ENCODE measurements at regions of chr9 and their contacts with region 1.

Region 1: GRCh38 chr9:98796364-98797101 is at the start of gene ANKS6:
- DNase-seq: peak; percentile 64 to 93 (median 82)
- ATAC-seq: peak; percentile 91
- H3K4me3 ChIP-seq: peak within 1 kb of the TSS; percentile 80
- H3K4me3 Mint-ChIP-seq: peak within 1 kb of the TSS; percentile 94
- H3K27ac ChIP-seq: peak within 1 kb of the TSS; percentile 23 to 31
- H3K27ac Mint-ChIP-seq: peak within 1 kb of the TSS; percentile 72
- H3K4me1 ChIP-seq: peaks cover 22% of the 10 kb centered on the region
- H3K4me1 Mint-ChIP-seq: peaks cover 37% of the 10 kb centered on the region
- H3K27me3 ChIP-seq: no peaks in the 10 kb centered on the region
- H3K27me3 Mint-ChIP-seq: no peaks in the 10 kb centered on the region
- CTCF ChIP-seq: peak; percentile 32
- total RNA-seq, gene ANKS6: 11.8 to 12.2 TPM

Region 2: DNA sequence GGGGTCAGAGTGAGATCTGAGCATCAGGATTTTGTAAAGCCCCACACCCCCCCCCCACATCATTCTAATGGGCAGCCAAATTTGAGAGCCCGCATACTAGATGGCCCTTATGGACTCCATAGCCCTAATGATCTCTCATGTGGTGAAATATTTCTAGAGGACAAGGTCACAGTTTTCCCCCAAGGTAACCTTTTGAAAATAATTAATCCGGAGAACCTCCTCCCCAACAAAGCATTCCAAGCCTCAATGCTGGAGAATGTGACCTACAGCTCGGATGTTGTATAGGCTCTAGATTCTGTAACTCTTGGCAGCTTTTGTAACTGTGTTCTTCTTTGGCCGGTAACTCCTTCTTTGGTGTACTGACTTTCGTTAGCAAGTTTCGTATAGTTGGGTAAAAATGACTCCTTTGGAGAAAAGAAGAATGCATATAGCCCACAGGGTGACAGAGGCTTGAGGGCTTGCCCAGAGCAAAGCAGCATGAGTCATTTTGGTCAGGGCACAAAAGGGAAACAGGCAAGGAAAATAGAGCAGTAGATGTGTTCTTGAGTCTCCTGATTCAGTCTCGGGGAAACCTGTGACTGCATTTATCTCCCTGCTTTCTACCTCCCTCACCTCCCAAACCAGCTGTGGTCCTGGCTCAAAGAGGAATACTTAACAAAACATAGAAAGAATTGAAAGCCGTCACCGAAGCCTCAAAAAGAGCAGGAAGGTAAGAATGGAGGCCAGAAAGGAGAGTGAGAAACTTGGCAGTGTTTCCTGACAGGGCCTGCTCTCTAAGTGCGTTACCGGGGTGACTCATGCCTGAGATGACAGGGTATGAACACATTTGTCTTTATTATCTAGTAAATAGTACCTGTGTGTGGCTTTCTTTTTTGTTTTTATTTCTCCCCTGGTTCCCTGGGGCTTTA is 1092.8 kb before region 1 on chr9:
- CTCF ChIA-PET with region 1: no interaction called
- POLR2A ChIA-PET with region 1: no interaction called
- intact Hi-C with region 1: loop called in 1 of 2 experiments (anchors 10 kb)
- DNase-seq: peak in 5 of 14 experiments; percentile 11 to 45 (median 24)
- ATAC-seq: peak; percentile 58
- H3K4me3 ChIP-seq: no peak overlapping the region
- H3K4me3 Mint-ChIP-seq: no peak overlapping the region
- H3K27ac ChIP-seq: no peak overlapping the region
- H3K27ac Mint-ChIP-seq: peak overlapping the region; percentile 68
- H3K4me1 ChIP-seq: peaks cover 29% of the 10 kb centered on the region
- H3K4me1 Mint-ChIP-seq: peaks cover 20% of the 10 kb centered on the region
- H3K27me3 ChIP-seq: no peaks in the 10 kb centered on the region
- H3K27me3 Mint-ChIP-seq: peaks cover 9% of the 10 kb centered on the region
- CTCF ChIP-seq: no peak

Region 3: DNA sequence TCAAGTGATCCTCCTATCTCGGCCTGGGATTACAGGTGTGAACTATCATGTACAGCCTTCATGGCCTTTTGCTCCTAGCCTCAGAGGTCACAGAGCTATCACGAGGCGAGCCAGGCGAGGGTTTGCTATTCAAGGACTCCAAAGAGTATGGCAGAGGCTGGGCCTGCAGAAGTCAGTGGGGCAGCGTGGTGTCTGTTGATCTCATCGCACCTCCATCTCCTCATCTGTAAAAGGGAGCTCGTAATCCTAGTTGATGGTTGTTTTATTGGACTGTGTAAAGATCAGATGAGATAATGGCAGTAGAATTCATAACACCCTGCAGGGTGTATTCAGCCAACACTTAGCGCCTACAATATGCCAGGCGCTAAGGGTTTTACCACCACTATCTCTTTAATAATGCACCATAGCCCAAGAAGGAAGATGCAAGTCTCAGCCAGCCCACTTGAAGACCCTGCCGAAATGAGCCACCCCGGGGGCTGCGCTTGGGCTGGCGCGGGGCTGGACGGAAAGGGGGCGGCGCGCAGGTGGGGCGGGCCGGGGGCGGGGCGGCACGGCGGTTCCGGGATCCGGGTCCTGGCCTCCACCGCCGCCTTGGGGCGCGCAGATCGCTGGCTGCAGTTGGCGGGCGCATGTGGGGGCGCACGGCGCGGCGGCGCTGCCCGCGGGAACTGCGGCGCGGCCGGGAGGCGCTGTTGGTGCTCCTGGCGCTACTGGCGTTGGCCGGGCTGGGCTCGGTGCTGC is 10.7 kb after region 1 on chr9 and contains the start of gene GALNT12:
- CTCF ChIA-PET with region 1: interaction called, 3 read pairs
- POLR2A ChIA-PET with region 1: interaction called, 15 read pairs
- intact Hi-C with region 1: loop called in 1 of 2 experiments (anchors 1 kb)
- DNase-seq: peak in 13 of 14 experiments; percentile 26 to 77 (median 54)
- ATAC-seq: peak; percentile 83
- H3K4me3 ChIP-seq: peak within 1 kb of the TSS; percentile 77
- H3K4me3 Mint-ChIP-seq: peak within 1 kb of the TSS; percentile 94
- H3K27ac ChIP-seq: no peak within 1 kb of the TSS
- H3K27ac Mint-ChIP-seq: peak within 1 kb of the TSS; percentile 39
- H3K4me1 ChIP-seq: peaks cover 20% of the 10 kb centered on the region
- H3K4me1 Mint-ChIP-seq: peaks cover 27% of the 10 kb centered on the region
- H3K27me3 ChIP-seq: peaks cover 4 to 5% of the 10 kb centered on the region in 2 experiments
- H3K27me3 Mint-ChIP-seq: peaks cover 8% of the 10 kb centered on the region
- CTCF ChIP-seq: no peak
- total RNA-seq, gene GALNT12: 8.7 to 11.5 TPM

Region 4: DNA sequence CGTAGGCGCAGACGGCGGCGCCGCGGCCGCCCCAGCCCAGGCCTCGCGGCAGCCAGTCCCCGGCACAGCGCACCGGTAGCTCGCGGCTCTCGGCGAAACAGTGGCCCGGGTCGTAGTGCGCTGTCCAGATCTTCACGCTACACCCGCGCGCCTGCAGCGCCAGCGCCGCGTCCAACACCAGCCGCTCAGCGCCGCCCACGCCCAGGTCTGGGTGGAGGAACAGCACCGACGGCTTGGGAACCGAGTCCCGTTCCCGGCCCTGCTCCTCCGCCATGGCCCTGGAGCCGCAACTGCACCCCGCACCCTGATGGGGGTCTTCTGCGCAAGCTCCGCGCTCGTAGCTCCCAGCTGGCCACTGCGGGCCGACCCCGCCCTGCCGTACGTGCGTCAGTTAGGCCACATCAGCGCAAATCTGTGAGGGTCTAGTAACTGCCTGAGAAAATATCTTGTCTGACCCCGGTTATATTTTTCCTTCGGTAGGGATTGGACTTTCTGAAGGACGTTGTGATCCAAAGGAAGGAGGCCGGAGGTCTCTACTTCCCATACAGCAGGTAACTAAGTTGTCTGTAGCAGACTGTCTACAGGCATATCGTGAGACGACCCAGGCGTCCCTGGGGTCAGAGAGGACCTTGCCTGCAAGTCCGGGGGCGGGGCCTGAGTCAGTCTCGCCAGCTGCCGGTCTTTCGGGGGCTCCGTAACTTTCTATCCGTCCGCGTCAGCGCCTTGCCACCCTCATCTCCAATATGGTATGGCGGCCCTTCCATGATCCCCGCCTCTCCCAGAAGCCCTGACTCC is 425.3 kb after region 1 on chr9 and contains the starts of genes ALG2 and SEC61B:
- CTCF ChIA-PET with region 1: no interaction called
- POLR2A ChIA-PET with region 1: no interaction called
- intact Hi-C with region 1: loop called in 1 of 2 experiments (anchors 5 kb)
- DNase-seq: peak; percentile 87 to 96 (median 90)
- ATAC-seq: peak; percentile 84
- H3K4me3 ChIP-seq: peak within 1 kb of the TSS; percentile 91
- H3K4me3 Mint-ChIP-seq: peak within 1 kb of the TSS; percentile 98
- H3K27ac ChIP-seq: peak within 1 kb of the TSS; percentile 89 to 95
- H3K27ac Mint-ChIP-seq: peak within 1 kb of the TSS; percentile 99
- H3K4me1 ChIP-seq: peaks cover 33% of the 10 kb centered on the region
- H3K4me1 Mint-ChIP-seq: peaks cover 81% of the 10 kb centered on the region
- H3K27me3 ChIP-seq: no peaks in the 10 kb centered on the region
- H3K27me3 Mint-ChIP-seq: no peaks in the 10 kb centered on the region
- CTCF ChIP-seq: no peak
- total RNA-seq, gene ALG2: 18.1 to 19.9 TPM
- total RNA-seq, gene SEC61B: 83.4 to 84.2 TPM

Region 5: DNA sequence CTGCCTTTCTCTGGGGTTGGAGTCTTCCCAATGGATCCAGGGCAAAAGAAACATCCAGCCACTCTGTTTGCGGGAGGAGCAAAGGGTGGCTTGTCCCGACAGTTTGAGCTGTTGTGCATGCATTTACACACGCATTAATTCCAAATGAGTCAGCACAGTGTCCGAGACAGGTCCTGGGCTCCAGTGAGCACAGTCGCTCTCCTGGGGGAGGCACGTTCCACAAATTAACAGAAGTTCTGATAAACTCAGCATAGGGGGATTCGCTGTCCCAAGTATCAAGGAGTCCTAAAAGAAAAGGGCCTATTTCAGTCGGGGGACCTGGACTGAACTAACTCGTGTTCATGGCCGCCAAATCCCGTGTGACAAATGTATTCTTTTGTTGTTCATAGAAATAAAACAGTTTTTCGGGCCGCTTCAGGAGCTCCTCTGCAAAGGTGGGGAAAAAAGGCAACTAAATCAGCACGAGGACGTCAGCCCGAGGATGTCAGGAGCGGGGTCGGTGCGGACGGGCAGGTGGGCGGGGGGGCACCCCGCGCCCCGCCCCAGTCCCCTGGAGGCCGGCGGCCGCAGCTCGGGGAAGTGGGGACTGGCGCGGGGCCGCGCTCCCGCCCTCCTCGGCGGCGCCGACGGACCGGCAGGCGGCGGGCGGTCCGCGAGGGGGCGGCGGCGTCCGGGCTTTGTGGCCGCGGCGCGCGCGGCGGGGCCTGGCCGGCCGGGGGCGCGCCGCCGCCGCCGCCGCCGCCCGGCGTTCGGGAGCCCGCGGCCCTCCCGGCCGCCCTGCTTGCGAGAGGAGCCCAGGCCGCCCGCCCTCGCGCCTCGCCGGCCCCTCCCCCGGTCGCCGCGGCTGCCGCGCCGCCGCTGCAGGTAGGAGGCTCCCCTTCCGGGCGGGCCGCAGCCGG is 1630.2 kb after region 1 on chr9 and contains the start of gene MSANTD3:
- CTCF ChIA-PET with region 1: no interaction called
- POLR2A ChIA-PET with region 1: no interaction called
- intact Hi-C with region 1: loop called in 1 of 2 experiments (anchors 10 kb)
- DNase-seq: peak; percentile 28 to 79 (median 54)
- ATAC-seq: peak; percentile 80
- H3K4me3 ChIP-seq: peak within 1 kb of the TSS; percentile 78
- H3K4me3 Mint-ChIP-seq: peak within 1 kb of the TSS; percentile 98
- H3K27ac ChIP-seq: peak within 1 kb of the TSS in 1 of 2 donors; percentile 0
- H3K27ac Mint-ChIP-seq: peak within 1 kb of the TSS; percentile 96
- H3K4me1 ChIP-seq: peaks cover 20% of the 10 kb centered on the region
- H3K4me1 Mint-ChIP-seq: peaks cover 44% of the 10 kb centered on the region
- H3K27me3 ChIP-seq: peaks cover 0 to 7% of the 10 kb centered on the region in 2 experiments
- H3K27me3 Mint-ChIP-seq: peaks cover 7% of the 10 kb centered on the region
- CTCF ChIP-seq: no peak
- total RNA-seq, gene MSANTD3: 8.8 to 9.6 TPM